ENCODE measurements at regions of chr2 and their contacts with region 1.

Region 1: DNA sequence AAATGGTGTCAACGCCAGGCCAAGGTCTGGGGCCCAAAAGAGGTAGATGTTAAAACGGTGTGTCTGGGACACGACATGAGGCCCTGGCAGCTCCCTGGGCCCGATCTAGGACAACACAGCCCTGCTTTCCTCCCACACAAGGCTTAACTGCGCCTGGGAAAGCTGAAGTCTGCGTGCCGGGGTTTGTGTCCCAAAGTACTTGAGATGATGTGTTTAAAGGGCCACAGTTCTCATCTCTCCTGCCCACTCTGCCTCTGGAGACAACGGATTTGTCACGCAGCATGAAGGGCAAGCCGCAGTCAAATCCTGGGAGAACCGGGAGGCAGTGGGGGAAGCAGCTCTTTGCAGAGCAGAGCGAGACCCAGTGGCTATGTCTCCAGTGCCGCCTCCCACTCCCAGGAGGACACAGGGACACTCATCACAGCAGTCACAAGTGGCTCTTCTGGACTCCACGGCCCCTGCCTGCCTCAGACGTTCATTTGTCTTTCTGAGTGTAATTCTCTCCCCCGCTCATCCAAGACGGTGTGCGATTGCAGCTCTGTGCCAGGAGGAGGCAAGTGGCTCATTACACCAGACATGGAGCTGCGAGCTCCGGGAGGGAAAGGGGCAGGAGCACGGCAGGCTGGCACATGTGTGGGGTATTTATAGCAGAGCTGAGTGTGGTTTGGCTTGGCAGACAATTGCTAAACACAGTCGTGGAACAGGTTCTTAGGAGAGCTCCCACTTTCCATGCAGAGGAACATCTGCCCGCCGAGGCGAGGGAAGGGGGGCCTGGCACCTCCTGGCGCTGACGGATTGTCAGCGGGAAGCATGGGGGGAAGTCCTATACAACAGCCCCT is 57.7 kb upstream of the SEMA4C start:
- DNase-seq: peak; percentile 96
- H3K4me3 ChIP-seq: peak overlapping the region; percentile 9 to 26 (median 22)
- H3K27ac ChIP-seq: peak overlapping the region; percentile 78 to 91 (median 85)
- H3K4me1 ChIP-seq: peaks cover 0 to 59% (median 36%) of the 10 kb centered on the region in 4 donors
- H3K27me3 ChIP-seq: no peaks in the 10 kb centered on the region
- CTCF ChIP-seq: peak; percentile 35 to 59 (median 49)
- EP300 ChIP-seq: peak in 1 of 4 donors; percentile 40
- POLR2A ChIP-seq: no peak

Region 2: GRCh38 chr2:96773922-96774321 is 153.7 kb before region 1 on chr2:
- intact Hi-C with region 1: no loop called
- DNase-seq: no peak
- H3K4me3 ChIP-seq: peak overlapping the region in 1 of 4 donors; percentile 6
- H3K27ac ChIP-seq: no peak overlapping the region
- H3K4me1 ChIP-seq: peaks cover 0 to 35% (median 15%) of the 10 kb centered on the region in 4 donors
- H3K27me3 ChIP-seq: no peaks in the 10 kb centered on the region
- CTCF ChIP-seq: no peak
- EP300 ChIP-seq: no peak
- POLR2A ChIP-seq: no peak

Region 3: DNA sequence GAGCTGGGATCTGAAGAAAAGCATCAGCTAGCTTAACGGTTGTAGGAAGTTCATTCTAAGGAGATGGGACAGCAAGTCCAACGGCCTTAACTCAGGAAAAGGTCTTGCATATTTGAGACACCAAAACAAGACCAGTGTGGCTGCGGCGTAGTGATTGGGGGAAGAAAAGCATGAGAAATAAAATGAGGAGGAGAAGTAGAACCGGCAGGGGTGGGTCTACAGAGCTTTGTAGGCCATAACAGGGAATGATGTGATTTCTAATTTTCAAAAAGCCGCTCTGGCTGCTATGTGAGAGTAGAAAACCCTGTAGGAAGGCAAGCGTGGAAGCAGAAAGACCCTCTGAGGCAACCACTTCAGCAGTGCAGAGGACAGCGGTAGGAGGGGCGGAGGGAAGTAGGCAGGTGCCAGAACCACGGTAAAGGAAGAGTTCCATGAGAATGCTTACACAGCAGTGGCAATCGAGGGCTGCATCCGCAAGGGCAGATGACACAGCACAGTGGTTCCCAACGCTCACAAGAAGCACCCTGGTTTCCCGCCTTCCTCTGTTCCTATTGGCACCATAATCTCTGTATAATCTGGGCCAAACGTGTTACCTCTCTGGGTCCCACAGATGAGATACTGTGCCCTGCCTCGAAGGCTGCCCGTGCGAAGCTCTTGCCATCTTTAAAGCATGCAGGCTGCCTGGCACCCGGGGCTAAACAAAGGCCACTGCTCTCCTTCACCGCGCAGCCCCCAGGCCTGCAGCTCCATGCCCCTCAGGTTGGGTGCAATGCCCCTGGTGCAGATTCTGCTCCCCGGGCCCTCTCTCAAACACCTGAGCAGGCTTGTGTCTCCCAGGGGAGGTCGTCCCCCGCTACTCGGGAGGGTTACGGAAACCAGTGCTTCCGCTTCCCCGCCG is 70.6 kb before region 1 on chr2:
- intact Hi-C with region 1: no loop called
- DNase-seq: peak; percentile 78
- H3K4me3 ChIP-seq: peak overlapping the region; percentile 64 to 85 (median 74)
- H3K27ac ChIP-seq: peak overlapping the region; percentile 87 to 100 (median 92)
- H3K4me1 ChIP-seq: peaks cover 0 to 58% (median 53%) of the 10 kb centered on the region in 4 donors
- H3K27me3 ChIP-seq: no peaks in the 10 kb centered on the region
- CTCF ChIP-seq: no peak
- EP300 ChIP-seq: no peak
- POLR2A ChIP-seq: no peak

Region 4: GRCh38 chr2:96945012-96945804 is 17.6 kb after region 1 on chr2:
- intact Hi-C with region 1: loop called (anchors 2 kb)
- DNase-seq: no peak
- H3K4me3 ChIP-seq: no peak overlapping the region
- H3K27ac ChIP-seq: peak overlapping the region in 1 of 4 donors; percentile 35
- H3K4me1 ChIP-seq: peaks cover 0 to 18% (median 10%) of the 10 kb centered on the region in 4 donors
- H3K27me3 ChIP-seq: no peaks in the 10 kb centered on the region
- CTCF ChIP-seq: no peak
- EP300 ChIP-seq: no peak
- POLR2A ChIP-seq: no peak

Region 5: DNA sequence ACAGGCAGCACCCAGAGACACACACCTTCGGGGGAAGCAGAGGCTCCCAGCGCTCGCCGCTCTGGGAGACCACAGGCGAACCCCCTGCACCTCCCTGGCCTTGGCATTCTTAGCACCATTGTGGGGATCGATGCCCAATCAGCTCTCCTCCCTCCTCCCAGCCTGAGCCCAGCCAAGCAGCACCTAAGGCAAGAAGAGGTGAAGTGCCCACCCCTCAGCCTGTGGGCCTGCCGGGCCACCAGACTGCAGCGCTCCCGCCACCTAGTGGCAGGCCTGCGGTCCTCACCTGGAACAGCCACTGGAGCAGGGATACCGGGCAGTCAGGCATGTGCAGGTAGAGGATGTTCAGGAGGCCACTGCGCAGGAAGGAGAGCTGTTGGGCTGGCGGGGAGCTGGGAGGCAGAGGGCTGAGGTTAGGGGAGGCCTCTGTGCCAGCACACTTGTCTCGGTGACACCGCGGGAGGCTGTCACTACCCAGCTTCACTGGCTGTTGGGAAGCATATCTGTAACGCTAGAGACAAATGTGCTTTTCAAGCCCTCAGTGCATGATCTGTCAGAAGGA is 23.6 kb after region 1 on chr2:
- intact Hi-C with region 1: loop called (anchors 1 kb)
- DNase-seq: peak; percentile 87
- H3K4me3 ChIP-seq: no peak overlapping the region
- H3K27ac ChIP-seq: peak overlapping the region; percentile 72 to 88 (median 82)
- H3K4me1 ChIP-seq: peaks cover 0 to 62% (median 55%) of the 10 kb centered on the region in 4 donors
- H3K27me3 ChIP-seq: no peaks in the 10 kb centered on the region
- CTCF ChIP-seq: peak; percentile 93 to 98 (median 96)
- EP300 ChIP-seq: no peak
- POLR2A ChIP-seq: no peak

Region 6: DNA sequence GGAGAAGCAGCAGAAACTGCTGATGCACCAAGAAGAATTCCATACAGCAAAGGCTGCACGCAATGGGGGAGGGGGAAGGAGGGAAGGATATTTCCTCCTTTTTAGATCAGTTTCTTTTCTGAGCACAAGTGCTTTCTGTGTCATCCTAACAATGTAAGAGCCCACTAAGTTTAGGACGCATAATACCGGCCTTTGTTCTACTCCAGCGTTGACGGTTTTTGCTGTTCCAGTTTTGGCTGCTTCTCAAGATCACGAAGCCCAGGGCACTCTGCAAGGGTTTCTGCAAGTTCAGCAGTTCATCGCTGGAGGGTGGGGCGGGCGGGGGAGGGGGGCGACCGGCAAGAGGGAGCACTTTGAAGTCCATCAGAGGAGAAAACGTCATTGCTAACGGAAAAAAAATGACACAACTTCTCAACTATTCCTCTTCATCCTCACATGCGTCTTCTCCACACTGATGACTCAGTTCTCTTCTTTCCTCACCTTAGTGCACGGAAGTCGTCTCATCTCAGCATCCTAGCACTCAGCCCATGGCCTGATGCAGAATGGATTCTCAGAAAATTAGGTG is 50.1 kb after region 1 on chr2:
- intact Hi-C with region 1: no loop called
- DNase-seq: no peak
- H3K4me3 ChIP-seq: peak overlapping the region in 2 of 4 donors; percentile 2 to 19
- H3K27ac ChIP-seq: peak overlapping the region in 1 of 4 donors; percentile 8
- H3K4me1 ChIP-seq: peaks cover 0 to 7% (median 3%) of the 10 kb centered on the region in 4 donors
- H3K27me3 ChIP-seq: no peaks in the 10 kb centered on the region
- CTCF ChIP-seq: no peak
- EP300 ChIP-seq: no peak
- POLR2A ChIP-seq: no peak